ENCODE measurements at regions of chr11 and their contacts with region 1.

Region 1: DNA sequence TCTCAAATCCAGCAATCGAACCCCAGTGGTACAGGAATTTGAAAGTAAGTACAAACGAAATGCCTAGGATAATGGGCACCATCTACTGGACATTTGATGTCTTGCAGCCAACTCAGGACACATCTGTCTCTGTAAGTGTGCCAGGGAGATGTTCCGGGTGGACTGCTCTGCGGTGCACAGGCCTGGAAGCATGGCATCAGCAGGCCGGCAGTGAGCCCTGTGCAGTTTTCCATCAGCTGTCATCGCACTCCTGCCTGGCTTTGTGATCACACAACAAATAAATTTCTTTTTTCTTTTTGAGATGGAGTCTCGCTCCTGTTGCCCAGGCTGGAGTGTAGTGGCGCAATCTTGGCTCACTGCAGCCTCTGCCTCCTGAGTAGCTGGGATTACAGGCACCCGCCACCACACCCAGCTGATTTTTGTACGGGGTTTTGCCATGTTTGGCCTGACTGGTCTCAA is 71.0 kb downstream of the JAM3 start:
- DNase-seq: peak; percentile 47 to 90 (median 80)
- H3K4me3 ChIP-seq: peak overlapping the region in 7 of 59 donors; percentile 1 to 25 (median 21)
- H3K27ac ChIP-seq: peak overlapping the region in 56 of 59 donors; percentile 33 to 89 (median 79)
- H3K27me3 ChIP-seq: no peaks in the 10 kb centered on the region
- CTCF ChIP-seq: peak; percentile 70 to 97 (median 92)

Region 2: DNA sequence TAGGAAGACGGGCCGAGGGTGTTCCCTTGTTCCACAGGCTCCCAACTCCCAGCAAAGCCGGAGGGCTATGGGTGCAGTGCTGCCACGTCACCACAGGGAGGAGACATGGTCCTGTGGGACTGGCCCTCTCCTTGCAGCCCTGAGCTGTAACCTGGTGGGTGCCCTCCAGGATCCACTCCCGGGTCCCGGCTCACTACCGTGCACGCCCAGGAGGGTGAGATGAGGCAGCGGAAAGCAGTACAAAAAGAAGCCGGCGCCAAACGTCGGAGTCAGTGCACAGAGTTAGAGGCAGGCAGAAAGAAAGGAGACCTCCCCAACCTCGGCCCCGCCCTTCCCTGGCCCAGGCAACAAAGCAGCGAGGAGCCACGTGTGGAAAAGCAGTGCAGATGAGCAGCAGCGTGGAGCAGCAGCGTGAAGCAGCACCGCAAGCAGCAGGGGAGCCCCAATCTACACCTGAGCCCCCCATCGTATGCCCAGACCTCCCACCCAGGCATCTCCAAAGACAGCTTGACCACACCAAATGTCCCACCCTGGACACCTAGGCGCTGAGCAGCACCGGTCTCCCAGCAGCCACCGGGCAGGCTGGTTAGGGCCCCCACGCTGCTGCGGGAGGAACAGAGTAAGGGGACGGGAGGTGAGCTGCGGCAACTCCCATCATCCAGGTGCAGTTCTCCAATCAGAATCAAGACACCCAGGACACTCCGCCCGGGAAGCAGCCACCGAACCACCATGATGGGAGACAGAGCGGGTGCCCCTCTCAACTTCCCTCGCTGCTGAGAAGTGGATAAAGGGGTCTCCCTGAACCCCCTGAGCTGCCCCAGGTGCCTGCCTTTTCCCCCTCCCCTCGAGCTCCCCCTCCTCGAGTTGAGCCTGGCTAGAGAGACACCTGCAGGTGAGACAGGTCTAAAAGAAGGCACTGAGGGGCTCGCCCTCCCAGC is 211.9 kb before region 1 on chr11:
- intact Hi-C with region 1: loop called in 1 of 2 experiments (anchors 5 kb)
- DNase-seq: peak; percentile 60 to 85 (median 76)
- H3K4me3 ChIP-seq: peak overlapping the region in 1 of 59 donors; percentile 17
- H3K27ac ChIP-seq: peak overlapping the region in 5 of 59 donors; percentile 8 to 44 (median 34)
- H3K27me3 ChIP-seq: peaks cover 0 to 10% (median 0%) of the 10 kb centered on the region in 45 donors
- CTCF ChIP-seq: peak; percentile 33 to 89 (median 82)

Region 3: GRCh38 chr11:134079317-134079716 is 60.6 kb before region 1 on chr11:
- intact Hi-C with region 1: no loop called
- DNase-seq: no peak
- H3K4me3 ChIP-seq: no peak overlapping the region
- H3K27ac ChIP-seq: peak overlapping the region in 42 of 59 donors; percentile 0 to 69 (median 26)
- H3K27me3 ChIP-seq: no peaks in the 10 kb centered on the region
- CTCF ChIP-seq: no peak

Measured in dorsolateral prefrontal cortex (tissue), 120 donors.